ENCODE measurements at regions of chr18 and their contacts with region 1.

Region 1: DNA sequence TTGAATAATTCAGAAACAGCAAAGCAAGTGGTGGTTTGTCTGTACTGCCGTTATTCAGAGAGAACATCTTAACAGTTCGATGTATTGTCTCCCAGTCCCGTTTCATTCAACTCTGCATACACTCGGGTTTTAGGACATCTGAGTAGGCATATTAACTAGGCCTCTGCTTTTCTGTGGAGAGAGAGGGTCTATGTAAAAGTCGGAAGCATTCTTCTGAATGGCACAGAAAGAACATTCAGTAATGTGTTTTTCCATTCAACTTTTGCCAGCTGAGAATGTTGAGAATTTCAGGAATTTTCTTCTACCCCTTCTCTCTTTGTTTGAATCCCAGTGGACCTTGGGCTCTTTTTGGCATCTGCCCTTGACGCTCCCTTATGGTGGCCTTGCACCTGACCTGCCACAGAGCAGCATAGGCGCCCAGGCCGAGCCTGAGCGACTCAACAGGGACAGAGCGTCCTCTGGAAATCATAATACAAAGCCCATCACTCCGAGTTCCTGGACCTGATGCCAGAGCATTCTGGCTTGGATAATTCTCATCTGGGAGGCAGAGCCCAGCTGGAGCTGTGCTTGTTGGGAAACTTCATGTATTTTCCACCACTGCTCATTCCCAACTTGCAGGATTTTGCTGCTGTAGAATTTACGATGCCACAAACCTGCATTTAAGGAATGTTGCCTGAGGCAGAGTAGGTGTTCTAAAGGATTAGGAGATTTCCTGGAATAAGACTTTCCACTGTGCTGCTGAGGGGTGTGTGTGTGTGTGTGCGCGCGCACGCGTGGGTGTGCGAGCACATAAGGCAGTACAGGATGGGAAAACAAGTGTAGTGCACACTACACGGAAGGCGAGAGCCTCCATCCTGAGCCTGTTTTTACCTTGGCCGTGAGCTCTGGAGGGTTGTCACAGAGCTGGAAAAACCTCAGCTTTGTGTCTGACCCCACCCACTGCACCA is 77.2 kb upstream of the TXNDC2 start:
- DNase-seq: no peak
- H3K4me3 ChIP-seq: no peak overlapping the region
- H3K27ac ChIP-seq: no peak overlapping the region
- H3K4me1 ChIP-seq: no peaks in the 10 kb centered on the region
- H3K27me3 ChIP-seq: no peaks in the 10 kb centered on the region
- CTCF ChIP-seq: no peak

Region 2: GRCh38 chr18:9861157-9861556 is 52.6 kb after region 1 on chr18:
- intact Hi-C with region 1: no loop called
- DNase-seq: no peak
- H3K4me3 ChIP-seq: no peak overlapping the region
- H3K27ac ChIP-seq: no peak overlapping the region
- H3K4me1 ChIP-seq: no peaks in the 10 kb centered on the region
- H3K27me3 ChIP-seq: no peaks in the 10 kb centered on the region
- CTCF ChIP-seq: no peak

Region 3: DNA sequence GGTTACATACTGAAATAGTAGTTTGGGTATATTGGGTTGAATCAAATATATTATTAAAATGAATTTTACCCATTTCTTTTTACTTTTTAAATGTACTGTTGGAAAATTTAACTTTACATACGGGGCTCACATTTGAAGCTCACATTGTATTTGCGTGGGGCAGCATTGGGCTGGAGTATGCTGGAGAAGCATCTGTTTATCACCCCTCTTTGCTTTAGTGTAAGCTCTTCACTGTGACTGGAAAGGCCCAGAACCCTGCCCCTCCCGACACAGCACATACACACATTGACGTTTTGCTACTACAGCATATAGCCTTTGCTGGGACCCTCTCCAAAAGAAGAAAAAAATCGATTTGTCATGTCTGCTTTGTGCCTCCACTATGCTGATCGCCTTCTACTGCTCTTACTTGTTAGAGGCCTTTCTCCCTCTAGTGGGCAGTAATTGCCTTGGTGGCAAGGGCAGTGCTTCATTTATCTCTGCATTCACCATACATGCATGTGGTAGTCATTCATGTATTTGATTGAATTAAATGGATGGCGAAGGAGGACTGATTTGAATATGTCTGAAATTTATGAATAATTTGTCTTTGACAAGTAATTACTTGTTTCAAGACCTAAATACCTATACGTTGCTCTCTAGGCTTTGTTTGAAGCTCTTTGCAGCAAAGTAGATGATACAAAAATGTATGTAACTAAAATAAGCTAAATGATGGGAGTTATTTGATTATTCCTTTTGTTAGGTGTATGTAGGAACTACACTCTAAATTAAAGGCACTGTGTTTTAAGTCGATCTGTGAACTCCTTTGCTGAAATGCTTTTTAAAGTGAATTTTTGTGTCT is 142.7 kb after region 1 on chr18:
- intact Hi-C with region 1: loop called (anchors 10 kb)
- DNase-seq: no peak
- H3K4me3 ChIP-seq: no peak overlapping the region
- H3K27ac ChIP-seq: no peak overlapping the region
- H3K4me1 ChIP-seq: no peaks in the 10 kb centered on the region
- H3K27me3 ChIP-seq: no peaks in the 10 kb centered on the region
- CTCF ChIP-seq: peak; percentile 48

Region 4: DNA sequence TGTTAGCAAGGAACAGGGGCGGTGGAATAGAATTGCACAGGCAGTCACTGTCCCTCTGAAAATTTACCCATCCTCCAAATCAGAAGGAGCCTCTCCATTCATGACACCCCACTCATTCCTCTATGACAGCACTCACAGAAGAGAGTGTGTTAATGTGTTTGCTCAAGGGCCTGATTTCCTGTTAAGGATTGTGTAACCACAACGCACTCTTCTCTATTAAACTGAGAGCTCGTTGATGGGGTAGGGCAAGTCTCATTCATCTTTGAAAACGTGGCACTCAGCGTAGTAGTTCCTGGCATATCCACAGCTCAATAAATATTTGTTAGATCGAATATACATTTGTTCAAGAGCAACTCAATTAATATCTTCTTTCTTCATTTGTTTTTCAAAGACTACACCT is 211.6 kb after region 1 on chr18:
- intact Hi-C with region 1: no loop called
- DNase-seq: no peak
- H3K4me3 ChIP-seq: no peak overlapping the region
- H3K27ac ChIP-seq: no peak overlapping the region
- H3K4me1 ChIP-seq: no peaks in the 10 kb centered on the region
- H3K27me3 ChIP-seq: no peaks in the 10 kb centered on the region
- CTCF ChIP-seq: no peak

Measured in colonic mucosa (tissue), 4 donors.